Activated T-helper 2 cell treated with anti-CD3 and anti-CD28 coated beads, Interferon-gamma antibody, Interleukin-2, Interleukin-4, amounts not matched to agents 10 μg/mL and 5 μg/mL and 100 μg/mL, durations not matched to agents 14 hours and 24 hours and 36 hours (primary cell): ENCODE measurements at regions of chr5 and their contacts with region 1.

Region 1: GRCh38 chr5:83718195-83718825 is 2.3 kb downstream of the HAPLN1 start:
- DNase-seq: no peak
- H3K4me3 Mint-ChIP-seq: no peak overlapping the region
- H3K27ac Mint-ChIP-seq: no peak overlapping the region
- H3K4me1 Mint-ChIP-seq: peaks cover 5% of the 10 kb centered on the region
- H3K27me3 Mint-ChIP-seq: peaks cover 46% of the 10 kb centered on the region

Region 2: DNA sequence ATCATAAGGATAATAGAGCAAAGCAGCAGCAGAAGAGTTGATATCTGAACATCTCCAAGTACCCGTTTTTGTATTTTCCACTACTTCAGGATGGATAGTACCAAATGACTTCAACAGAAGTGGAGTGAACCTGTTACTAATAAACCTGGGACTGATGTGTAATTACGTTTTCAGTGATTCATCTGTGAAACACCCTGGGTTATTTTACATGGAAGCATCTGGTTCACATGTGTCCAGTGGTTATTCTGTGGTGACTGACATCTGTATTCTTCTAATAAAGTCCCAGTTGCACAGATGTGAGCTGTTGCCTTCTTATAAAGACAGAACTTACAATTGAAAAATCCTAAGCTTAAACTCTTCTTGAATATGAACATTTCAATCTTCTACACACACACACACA is 386.5 kb before region 1 on chr5:
- intact Hi-C with region 1: no loop called
- DNase-seq: no peak
- H3K4me3 Mint-ChIP-seq: no peak overlapping the region
- H3K27ac Mint-ChIP-seq: no peak overlapping the region
- H3K4me1 Mint-ChIP-seq: no peaks in the 10 kb centered on the region
- H3K27me3 Mint-ChIP-seq: no peaks in the 10 kb centered on the region

Region 3: GRCh38 chr5:83688281-83688680 is 30.0 kb before region 1 on chr5:
- intact Hi-C with region 1: no loop called
- DNase-seq: no peak
- H3K4me3 Mint-ChIP-seq: no peak overlapping the region
- H3K27ac Mint-ChIP-seq: no peak overlapping the region
- H3K4me1 Mint-ChIP-seq: no peaks in the 10 kb centered on the region
- H3K27me3 Mint-ChIP-seq: no peaks in the 10 kb centered on the region

Region 4: DNA sequence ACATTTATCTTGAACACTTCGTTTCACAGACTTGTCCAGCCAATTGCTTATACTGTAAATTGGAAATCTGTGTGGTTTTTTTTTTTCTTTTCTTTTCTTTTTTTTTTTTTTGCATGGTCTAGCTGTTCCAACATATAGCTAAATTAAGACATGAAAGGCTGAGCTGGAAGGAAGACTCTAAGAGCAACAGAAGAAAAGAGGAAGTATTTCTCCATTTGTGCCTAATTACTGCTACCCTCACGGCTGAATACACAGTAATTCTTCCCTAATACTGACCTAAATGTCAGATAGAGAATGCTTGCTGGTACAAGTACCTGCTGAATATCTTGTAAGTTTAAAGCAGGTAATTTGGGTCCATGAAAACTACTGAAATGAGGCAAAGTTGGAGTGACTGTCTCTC is 13.3 kb after region 1 on chr5:
- intact Hi-C with region 1: no loop called
- DNase-seq: no peak
- H3K4me3 Mint-ChIP-seq: no peak overlapping the region
- H3K27ac Mint-ChIP-seq: no peak overlapping the region
- H3K4me1 Mint-ChIP-seq: no peaks in the 10 kb centered on the region
- H3K27me3 Mint-ChIP-seq: no peaks in the 10 kb centered on the region

Region 5: DNA sequence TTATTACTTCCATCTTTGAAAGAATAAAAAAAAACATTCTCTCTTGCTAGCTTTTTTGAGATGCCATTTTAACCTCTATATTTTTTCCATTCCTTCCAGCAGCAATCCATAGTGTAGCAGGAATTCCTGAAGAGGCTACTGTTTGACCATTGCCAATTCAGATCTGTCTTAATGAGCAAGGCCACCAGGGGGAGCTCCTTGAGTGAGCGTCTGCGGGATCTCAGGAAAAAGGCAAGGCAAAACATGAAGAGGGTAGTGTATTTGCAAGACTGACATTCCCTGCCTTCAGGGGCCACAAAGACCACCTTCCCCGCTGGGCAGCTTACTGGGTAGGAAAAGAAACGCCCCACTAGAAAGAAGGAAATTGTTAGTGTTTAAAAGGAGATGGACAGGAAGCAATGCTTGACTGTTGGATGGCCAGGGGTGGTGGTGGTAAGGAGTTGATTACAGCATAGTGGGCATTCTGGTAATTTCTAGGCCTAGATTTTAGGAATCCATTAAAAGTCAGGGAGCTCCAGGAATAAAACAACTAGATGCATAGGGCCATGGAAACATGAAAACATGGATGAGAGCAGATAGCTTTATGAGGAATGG is 208.9 kb after region 1 on chr5:
- intact Hi-C with region 1: loop called (anchors 10 kb)
- DNase-seq: no peak
- H3K4me3 Mint-ChIP-seq: no peak overlapping the region
- H3K27ac Mint-ChIP-seq: no peak overlapping the region
- H3K4me1 Mint-ChIP-seq: no peaks in the 10 kb centered on the region
- H3K27me3 Mint-ChIP-seq: no peaks in the 10 kb centered on the region

Region 6: GRCh38 chr5:84382363-84383295 is 664.3 kb after region 1 on chr5:
- intact Hi-C with region 1: loop called (anchors 5 kb)
- DNase-seq: no peak
- H3K4me3 Mint-ChIP-seq: no peak overlapping the region
- H3K27ac Mint-ChIP-seq: no peak overlapping the region
- H3K4me1 Mint-ChIP-seq: peaks cover 8% of the 10 kb centered on the region
- H3K27me3 Mint-ChIP-seq: peaks cover 45% of the 10 kb centered on the region